ENCODE measurements at regions of chr18 and their contacts with region 1.

Region 1: DNA sequence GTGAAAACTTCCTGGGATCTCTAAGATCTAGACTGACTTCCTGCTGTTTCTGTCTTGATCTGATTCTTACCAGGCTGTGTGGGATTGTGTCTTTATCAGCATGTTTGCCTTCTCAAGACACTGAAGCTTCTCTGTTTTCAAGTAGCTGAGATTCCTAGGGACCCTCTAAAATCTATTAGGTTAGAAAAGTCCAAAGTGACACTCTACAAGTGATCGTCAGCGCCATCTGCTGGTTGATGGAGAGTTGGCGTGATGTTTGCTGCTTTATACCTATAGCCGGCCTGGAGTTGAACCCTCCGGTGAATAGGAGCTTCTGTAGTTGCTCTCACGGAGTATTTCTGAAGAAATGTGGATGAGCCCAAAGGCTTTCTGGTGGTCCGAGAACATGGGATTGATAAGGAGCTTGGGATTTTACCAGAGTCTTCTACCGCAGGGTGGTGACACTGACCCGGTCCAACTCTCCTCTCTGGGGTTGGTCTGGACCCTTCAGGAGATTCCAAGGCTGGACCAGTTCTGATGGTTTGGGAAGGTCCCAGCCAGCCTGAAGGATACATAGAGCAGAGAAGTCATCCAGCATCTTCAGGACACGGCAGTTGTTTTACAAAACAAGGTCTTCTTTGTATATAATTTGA is 96.0 kb upstream of the TTC39C start:
- DNase-seq: peak; percentile 61 to 83 (median 67)
- H3K4me3 ChIP-seq: no peak overlapping the region
- H3K4me3 Mint-ChIP-seq: no peak overlapping the region
- H3K27ac ChIP-seq: no peak overlapping the region
- H3K27ac Mint-ChIP-seq: peak overlapping the region in 1 of 8 donors; percentile 19
- H3K4me1 ChIP-seq: peaks cover 13% of the 10 kb centered on the region
- H3K4me1 Mint-ChIP-seq: peaks cover 15 to 31% (median 28%) of the 10 kb centered on the region in 3 donors
- H3K27me3 ChIP-seq: no peaks in the 10 kb centered on the region
- H3K27me3 Mint-ChIP-seq: peaks cover 0 to 5% of the 10 kb centered on the region in 2 donors

Region 2: GRCh38 chr18:23623040-23623439 is 295.5 kb before region 1 on chr18:
- CTCF ChIA-PET with region 1: interaction called, 10 read pairs
- POLR2A ChIA-PET with region 1: no interaction called
- DNase-seq: no peak
- H3K4me3 ChIP-seq: no peak overlapping the region
- H3K4me3 Mint-ChIP-seq: no peak overlapping the region
- H3K27ac ChIP-seq: no peak overlapping the region
- H3K27ac Mint-ChIP-seq: no peak overlapping the region
- H3K4me1 ChIP-seq: peaks cover 8% of the 10 kb centered on the region
- H3K4me1 Mint-ChIP-seq: peaks cover 6 to 19% (median 9%) of the 10 kb centered on the region in 3 donors
- H3K27me3 ChIP-seq: peaks cover 32% of the 10 kb centered on the region
- H3K27me3 Mint-ChIP-seq: peaks cover 23 to 39% of the 10 kb centered on the region in 2 donors

Region 3: DNA sequence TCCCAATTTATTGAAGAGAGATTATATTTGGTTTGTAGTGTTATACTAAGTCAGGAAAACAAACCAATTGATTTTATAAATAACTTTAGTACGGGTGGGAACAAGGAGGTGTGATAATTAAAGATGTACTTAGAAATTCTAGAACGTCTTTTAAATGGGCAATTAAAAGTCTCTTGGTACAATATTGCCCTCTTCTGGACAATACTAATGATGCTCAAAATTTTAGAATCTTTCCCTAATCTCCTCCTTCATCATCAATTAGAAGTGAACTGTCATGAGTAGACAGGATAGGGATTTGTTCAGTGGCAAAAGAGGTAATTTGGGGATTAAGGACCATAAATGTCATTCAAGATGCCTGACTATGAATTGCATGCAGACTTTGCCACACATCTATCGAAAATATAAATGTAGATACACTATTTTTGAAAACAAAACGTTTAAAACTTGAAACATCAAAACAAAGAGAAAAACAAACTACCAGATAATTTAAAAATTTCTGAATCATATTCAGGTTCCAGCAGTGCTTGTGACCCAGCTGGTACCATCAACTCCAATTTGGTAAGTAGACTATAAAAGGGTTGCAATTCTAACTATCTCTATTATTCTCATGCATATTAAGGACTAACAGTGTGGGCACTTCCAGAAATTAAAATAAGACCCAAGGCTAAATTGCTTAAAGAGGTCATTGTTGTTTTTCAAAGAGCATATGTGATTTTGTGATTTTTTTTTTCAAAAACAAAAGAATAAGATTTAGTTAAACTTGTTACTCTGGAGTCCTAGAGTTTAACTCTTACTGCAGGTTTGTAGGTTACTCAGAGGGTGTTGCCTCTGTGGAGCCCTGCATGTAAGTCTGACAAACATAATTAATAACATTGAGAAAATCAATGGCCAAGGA is 105.7 kb before region 1 on chr18:
- CTCF ChIA-PET with region 1: interaction called, 10 read pairs
- POLR2A ChIA-PET with region 1: no interaction called
- DNase-seq: peak in 2 of 5 donors; percentile 19 to 20
- H3K4me3 ChIP-seq: no peak overlapping the region
- H3K4me3 Mint-ChIP-seq: no peak overlapping the region
- H3K27ac ChIP-seq: no peak overlapping the region
- H3K27ac Mint-ChIP-seq: peak overlapping the region in 1 of 8 donors; percentile 3
- H3K4me1 ChIP-seq: peaks cover 15% of the 10 kb centered on the region
- H3K4me1 Mint-ChIP-seq: peaks cover 16 to 30% (median 26%) of the 10 kb centered on the region in 3 donors
- H3K27me3 ChIP-seq: no peaks in the 10 kb centered on the region
- H3K27me3 Mint-ChIP-seq: no peaks in the 10 kb centered on the region

Region 4: DNA sequence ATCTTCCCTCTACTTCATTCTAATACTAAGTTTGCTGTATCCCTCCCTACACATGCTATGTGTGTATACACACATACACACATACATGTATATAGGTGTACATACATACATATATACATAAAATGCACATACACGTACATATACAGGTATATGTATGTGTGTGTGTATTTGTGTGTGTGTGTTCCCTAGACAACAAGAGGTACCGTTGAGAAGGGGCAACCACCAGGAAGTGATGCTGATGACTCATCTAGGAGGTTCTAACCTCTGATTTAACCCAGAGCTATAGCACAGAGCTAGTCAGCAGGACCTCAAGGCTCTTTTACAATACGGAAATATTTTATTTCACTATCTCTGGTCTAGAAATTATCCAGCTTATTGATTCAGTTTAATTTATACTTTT is 90.1 kb before region 1 on chr18:
- CTCF ChIA-PET with region 1: interaction called, 10 read pairs
- POLR2A ChIA-PET with region 1: no interaction called
- DNase-seq: peak; percentile 16 to 82 (median 55)
- H3K4me3 ChIP-seq: no peak overlapping the region
- H3K4me3 Mint-ChIP-seq: peak overlapping the region in 2 of 7 donors; percentile 5 to 12
- H3K27ac ChIP-seq: peak overlapping the region; percentile 5
- H3K27ac Mint-ChIP-seq: peak overlapping the region in 7 of 8 donors; percentile 44 to 95 (median 83)
- H3K4me1 ChIP-seq: peaks cover 7% of the 10 kb centered on the region
- H3K4me1 Mint-ChIP-seq: peaks cover 14 to 33% (median 19%) of the 10 kb centered on the region in 3 donors
- H3K27me3 ChIP-seq: no peaks in the 10 kb centered on the region
- H3K27me3 Mint-ChIP-seq: peaks cover 0 to 2% of the 10 kb centered on the region in 2 donors

Region 5: GRCh38 chr18:23906658-23907057 is 11.9 kb before region 1 on chr18:
- CTCF ChIA-PET with region 1: interaction called, 10 read pairs
- POLR2A ChIA-PET with region 1: no interaction called
- DNase-seq: no peak
- H3K4me3 ChIP-seq: no peak overlapping the region
- H3K4me3 Mint-ChIP-seq: no peak overlapping the region
- H3K27ac ChIP-seq: no peak overlapping the region
- H3K27ac Mint-ChIP-seq: no peak overlapping the region
- H3K4me1 ChIP-seq: no peaks in the 10 kb centered on the region
- H3K4me1 Mint-ChIP-seq: no peaks in the 10 kb centered on the region
- H3K27me3 ChIP-seq: no peaks in the 10 kb centered on the region
- H3K27me3 Mint-ChIP-seq: no peaks in the 10 kb centered on the region

Region 6: DNA sequence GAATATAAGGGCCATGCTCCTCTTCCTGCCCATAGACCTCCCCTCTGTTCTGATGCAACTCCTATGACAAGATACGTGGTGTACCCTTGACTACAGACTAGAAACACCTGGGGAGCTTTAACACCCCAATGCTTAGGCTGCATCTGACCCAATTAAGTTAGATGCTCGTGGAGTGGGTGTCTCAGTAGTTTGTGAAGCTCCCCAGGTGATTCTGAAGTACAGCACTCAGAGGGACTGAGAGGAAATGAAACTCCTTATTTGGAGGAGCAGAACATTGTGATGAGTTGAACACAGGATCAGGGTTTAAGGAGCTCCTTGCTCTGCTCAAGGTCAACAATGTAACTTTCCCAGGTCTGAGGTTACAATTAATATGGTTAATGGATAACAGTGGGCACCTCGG is 15.7 kb after region 1 on chr18:
- CTCF ChIA-PET with region 1: interaction called, 21 read pairs
- POLR2A ChIA-PET with region 1: no interaction called
- DNase-seq: no peak
- H3K4me3 ChIP-seq: no peak overlapping the region
- H3K4me3 Mint-ChIP-seq: no peak overlapping the region
- H3K27ac ChIP-seq: no peak overlapping the region
- H3K27ac Mint-ChIP-seq: peak overlapping the region in 6 of 8 donors; percentile 1 to 82 (median 64)
- H3K4me1 ChIP-seq: peaks cover 64% of the 10 kb centered on the region
- H3K4me1 Mint-ChIP-seq: peaks cover 58 to 78% (median 68%) of the 10 kb centered on the region in 3 donors
- H3K27me3 ChIP-seq: no peaks in the 10 kb centered on the region
- H3K27me3 Mint-ChIP-seq: no peaks in the 10 kb centered on the region

Region 7: GRCh38 chr18:24071029-24071428 is 152.5 kb after region 1 on chr18:
- CTCF ChIA-PET with region 1: no interaction called
- POLR2A ChIA-PET with region 1: no interaction called
- DNase-seq: no peak
- H3K4me3 ChIP-seq: no peak overlapping the region
- H3K4me3 Mint-ChIP-seq: no peak overlapping the region
- H3K27ac ChIP-seq: no peak overlapping the region
- H3K27ac Mint-ChIP-seq: no peak overlapping the region
- H3K4me1 ChIP-seq: peaks cover 8% of the 10 kb centered on the region
- H3K4me1 Mint-ChIP-seq: peaks cover 37 to 76% (median 64%) of the 10 kb centered on the region in 3 donors
- H3K27me3 ChIP-seq: no peaks in the 10 kb centered on the region
- H3K27me3 Mint-ChIP-seq: no peaks in the 10 kb centered on the region